Activated T-helper 1 cell treated with anti-CD3 and anti-CD28 coated beads, Interleukin-12 subunit alpha, Interleukin-12 subunit beta, Interleukin-2, Interleukin-4 antibody, amounts not matched to agents 30 ng/mL and 10 ng/mL and 1 ng/mL, durations not matched to agents 14 hours and 24 hours and 36 hours (primary cell): ENCODE measurements at regions of chr4 and their contacts with region 1.

Region 1: GRCh38 chr4:98510757-98511517 is 147.5 kb downstream of the TSPAN5 start:
- DNase-seq: peak; percentile 34
- H3K4me3 Mint-ChIP-seq: peak overlapping the region; percentile 47
- H3K27ac Mint-ChIP-seq: peak overlapping the region; percentile 83
- H3K4me1 Mint-ChIP-seq: peaks cover 85% of the 10 kb centered on the region
- H3K27me3 Mint-ChIP-seq: no peaks in the 10 kb centered on the region

Region 2: DNA sequence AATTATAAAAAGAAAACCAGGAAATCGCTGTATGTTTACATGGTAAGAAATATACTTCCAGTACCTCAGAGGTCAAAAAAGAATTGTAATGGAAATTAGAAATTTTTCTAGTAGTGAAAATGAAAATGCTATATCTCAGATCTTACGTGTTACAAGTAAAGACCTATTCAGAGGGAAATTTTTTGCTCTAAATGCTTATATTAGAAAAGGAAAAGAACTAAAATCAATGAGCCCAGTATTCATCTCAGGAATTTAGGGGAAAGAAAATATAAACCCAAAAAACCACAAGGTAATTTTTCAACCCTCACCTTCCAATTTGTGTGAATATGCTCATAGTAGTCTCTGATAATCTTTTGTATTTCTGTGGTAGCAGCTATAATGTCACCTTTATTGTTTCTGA is 104.1 kb before region 1 on chr4:
- intact Hi-C with region 1: loop called (anchors 1 kb)
- DNase-seq: no peak
- H3K4me3 Mint-ChIP-seq: no peak overlapping the region
- H3K27ac Mint-ChIP-seq: no peak overlapping the region
- H3K4me1 Mint-ChIP-seq: peaks cover 25% of the 10 kb centered on the region
- H3K27me3 Mint-ChIP-seq: no peaks in the 10 kb centered on the region

Region 3: DNA sequence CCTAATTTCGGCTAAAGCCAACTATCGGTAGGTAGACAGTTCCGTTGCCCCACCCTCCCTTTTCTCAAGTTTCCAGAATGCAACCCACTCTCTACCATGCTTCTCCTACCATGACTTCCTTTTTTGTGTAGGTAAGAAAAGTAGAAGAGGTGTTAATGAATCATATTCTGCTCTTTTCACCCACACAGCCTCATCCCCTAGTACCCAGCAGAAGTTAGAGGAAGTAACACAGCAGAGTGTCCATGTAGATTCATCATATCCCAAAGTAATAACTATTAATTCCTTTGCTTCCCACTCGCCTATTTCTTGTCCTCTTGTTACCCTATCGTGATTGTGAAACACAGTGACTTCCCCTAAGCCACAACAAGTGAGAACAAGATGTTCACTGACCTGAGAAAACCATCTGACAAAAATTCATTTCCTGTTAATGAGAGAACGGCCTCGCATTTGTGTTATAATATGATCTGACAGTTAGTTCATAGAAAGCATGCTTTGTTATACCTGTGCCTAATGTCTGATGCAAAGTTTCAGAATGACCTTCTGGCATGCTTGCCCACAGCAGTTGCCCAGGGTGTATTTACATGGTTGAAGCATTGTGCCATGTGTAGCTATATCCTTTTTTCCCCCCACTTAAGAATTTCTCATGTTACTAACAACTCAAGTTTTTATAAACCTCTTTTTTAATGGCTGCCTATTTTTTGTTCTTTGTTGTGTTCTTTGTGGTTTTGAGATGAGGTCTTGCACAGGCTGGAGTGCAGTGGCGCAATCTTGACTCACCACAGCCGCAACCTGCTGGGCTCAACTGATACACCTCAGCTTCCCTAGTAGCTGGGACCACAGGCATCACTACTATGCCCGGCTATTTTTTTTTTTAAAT is 64.2 kb before region 1 on chr4:
- intact Hi-C with region 1: loop called (anchors 1 kb)
- DNase-seq: peak; percentile 44
- H3K4me3 Mint-ChIP-seq: peak overlapping the region; percentile 67
- H3K27ac Mint-ChIP-seq: peak overlapping the region; percentile 90
- H3K4me1 Mint-ChIP-seq: peaks cover 43% of the 10 kb centered on the region
- H3K27me3 Mint-ChIP-seq: peaks cover 3% of the 10 kb centered on the region

Region 4: GRCh38 chr4:98482847-98483806 is 27.8 kb before region 1 on chr4:
- intact Hi-C with region 1: loop called (anchors 1 kb)
- DNase-seq: peak; percentile 40
- H3K4me3 Mint-ChIP-seq: peak overlapping the region; percentile 72
- H3K27ac Mint-ChIP-seq: peak overlapping the region; percentile 98
- H3K4me1 Mint-ChIP-seq: peaks cover 92% of the 10 kb centered on the region
- H3K27me3 Mint-ChIP-seq: no peaks in the 10 kb centered on the region

Region 5: GRCh38 chr4:98493296-98493695 is 17.6 kb before region 1 on chr4:
- intact Hi-C with region 1: loop called (anchors 1 kb)
- DNase-seq: no peak
- H3K4me3 Mint-ChIP-seq: peak overlapping the region; percentile 3
- H3K27ac Mint-ChIP-seq: peak overlapping the region; percentile 67
- H3K4me1 Mint-ChIP-seq: peaks cover 54% of the 10 kb centered on the region
- H3K27me3 Mint-ChIP-seq: no peaks in the 10 kb centered on the region

Region 6: GRCh38 chr4:98528882-98529281 is 17.9 kb after region 1 on chr4:
- intact Hi-C with region 1: loop called (anchors 1 kb)
- DNase-seq: no peak
- H3K4me3 Mint-ChIP-seq: peak overlapping the region; percentile 9
- H3K27ac Mint-ChIP-seq: peak overlapping the region; percentile 64
- H3K4me1 Mint-ChIP-seq: peaks cover 54% of the 10 kb centered on the region
- H3K27me3 Mint-ChIP-seq: no peaks in the 10 kb centered on the region

Region 7: DNA sequence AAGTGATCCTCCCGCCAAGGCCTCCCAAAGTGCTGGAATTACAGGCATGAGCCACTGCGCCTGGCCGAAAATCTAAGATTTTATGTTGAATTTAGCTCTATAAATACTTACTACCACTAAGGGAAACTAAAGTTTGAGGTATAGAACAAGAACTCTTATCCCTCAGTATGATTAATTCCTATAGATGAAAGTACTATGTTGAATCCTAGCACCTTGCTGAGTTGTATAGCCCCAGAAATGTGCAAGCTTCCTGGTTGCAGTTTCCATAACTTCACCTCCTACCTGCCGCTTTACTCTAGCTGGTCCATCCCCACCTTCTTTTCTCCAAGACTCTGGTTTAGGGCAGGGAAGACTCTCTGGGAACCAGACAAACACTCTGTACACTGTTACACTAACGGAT is 159.2 kb after region 1 on chr4:
- intact Hi-C with region 1: no loop called
- DNase-seq: no peak
- H3K4me3 Mint-ChIP-seq: no peak overlapping the region
- H3K27ac Mint-ChIP-seq: no peak overlapping the region
- H3K4me1 Mint-ChIP-seq: peaks cover 21% of the 10 kb centered on the region
- H3K27me3 Mint-ChIP-seq: peaks cover 2% of the 10 kb centered on the region